B cell (primary cell): ENCODE measurements at regions of chr20 and their contacts with region 1.

Region 1: DNA sequence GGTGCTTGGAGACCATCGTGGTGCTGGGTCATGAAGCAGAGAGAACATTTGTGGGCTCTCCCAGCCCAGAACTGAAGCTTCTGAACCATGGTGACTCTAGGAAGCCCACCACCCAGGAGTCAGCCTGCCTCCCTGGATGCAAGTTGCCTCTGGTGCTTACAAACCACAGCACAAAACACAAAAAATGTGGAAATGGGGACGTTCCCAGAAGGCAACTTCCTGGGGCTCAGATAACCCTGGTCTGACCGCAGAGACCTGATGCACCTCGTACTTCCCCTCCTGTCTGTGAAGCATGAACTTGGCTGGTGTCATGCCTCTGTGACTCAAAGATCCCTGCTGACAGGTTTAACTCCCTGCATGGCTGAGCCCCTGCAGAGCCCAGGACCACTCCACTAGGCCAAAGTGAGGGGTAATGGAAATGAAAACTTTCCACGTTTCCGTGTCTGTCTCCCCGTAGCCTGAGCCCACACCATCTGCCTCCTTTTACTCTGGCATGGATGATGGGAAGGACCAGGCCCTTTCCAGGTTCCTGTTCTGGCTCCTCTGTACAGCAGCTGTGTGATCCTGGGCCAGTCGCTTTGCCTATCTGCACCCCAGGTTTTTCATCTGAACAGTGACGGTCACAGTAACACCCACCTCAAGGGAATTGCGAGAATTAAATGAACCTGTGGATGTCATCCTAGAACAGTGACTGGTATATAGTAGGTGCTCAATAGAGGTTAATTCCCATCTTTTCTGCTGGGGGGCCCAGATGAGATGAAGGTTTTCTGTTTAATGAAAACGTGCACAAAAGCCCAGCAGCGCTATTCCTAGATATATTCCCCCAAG is 57.7 kb downstream of the PPP1R16B start:
- DNase-seq: peak; percentile 91
- ATAC-seq: peak; percentile 78
- H3K4me3 ChIP-seq: peak overlapping the region in 4 of 5 experiments; percentile 15 to 39 (median 18)
- H3K4me3 Mint-ChIP-seq: peak overlapping the region; percentile 68
- H3K27ac ChIP-seq: peak overlapping the region; percentile 97
- H3K27ac Mint-ChIP-seq: peak overlapping the region; percentile 86
- H3K4me1 ChIP-seq: peaks cover 83 to 98% of the 10 kb centered on the region in 2 donors
- H3K4me1 Mint-ChIP-seq: peaks cover 90% of the 10 kb centered on the region
- H3K27me3 ChIP-seq: no peaks in the 10 kb centered on the region
- H3K27me3 Mint-ChIP-seq: no peaks in the 10 kb centered on the region
- CTCF ChIP-seq: no peak

Region 2: GRCh38 chr20:37406010-37406998 is 1456.9 kb before region 1 on chr20:
- CTCF ChIA-PET with region 1: no interaction called
- POLR2A ChIA-PET with region 1: no interaction called
- intact Hi-C with region 1: no loop called
- DNase-seq: peak; percentile 63
- ATAC-seq: peak; percentile 37
- H3K4me3 ChIP-seq: peak overlapping the region in 4 of 5 experiments; percentile 17 to 68 (median 47)
- H3K4me3 Mint-ChIP-seq: peak overlapping the region; percentile 74
- H3K27ac ChIP-seq: no peak overlapping the region
- H3K27ac Mint-ChIP-seq: no peak overlapping the region
- H3K4me1 ChIP-seq: peaks cover 16 to 30% of the 10 kb centered on the region in 2 donors
- H3K4me1 Mint-ChIP-seq: peaks cover 28% of the 10 kb centered on the region
- H3K27me3 ChIP-seq: peaks cover 0 to 13% (median 2%) of the 10 kb centered on the region in 4 experiments
- H3K27me3 Mint-ChIP-seq: peaks cover 16% of the 10 kb centered on the region
- CTCF ChIP-seq: no peak

Region 3: GRCh38 chr20:38875175-38875993 is 12.1 kb after region 1 on chr20:
- CTCF ChIA-PET with region 1: interaction called, 81 read pairs
- POLR2A ChIA-PET with region 1: interaction called, 14 read pairs
- intact Hi-C with region 1: loop called (anchors 1 kb)
- DNase-seq: peak; percentile 93
- ATAC-seq: peak; percentile 73
- H3K4me3 ChIP-seq: peak overlapping the region in 4 of 5 experiments; percentile 14 to 47 (median 35)
- H3K4me3 Mint-ChIP-seq: peak overlapping the region; percentile 86
- H3K27ac ChIP-seq: peak overlapping the region; percentile 93 to 99
- H3K27ac Mint-ChIP-seq: peak overlapping the region; percentile 100
- H3K4me1 ChIP-seq: peaks cover 97 to 99% of the 10 kb centered on the region in 2 donors
- H3K4me1 Mint-ChIP-seq: peaks cover 94% of the 10 kb centered on the region
- H3K27me3 ChIP-seq: no peaks in the 10 kb centered on the region
- H3K27me3 Mint-ChIP-seq: no peaks in the 10 kb centered on the region
- CTCF ChIP-seq: no peak

Region 4: GRCh38 chr20:38883081-38883980 is 20.1 kb after region 1 on chr20:
- CTCF ChIA-PET with region 1: interaction called, 12 read pairs
- POLR2A ChIA-PET with region 1: interaction called, 9 read pairs
- intact Hi-C with region 1: no loop called
- DNase-seq: no peak
- ATAC-seq: no peak
- H3K4me3 ChIP-seq: no peak overlapping the region
- H3K4me3 Mint-ChIP-seq: peak overlapping the region; percentile 82
- H3K27ac ChIP-seq: peak overlapping the region; percentile 66 to 99
- H3K27ac Mint-ChIP-seq: peak overlapping the region; percentile 94
- H3K4me1 ChIP-seq: peaks cover 90 to 99% of the 10 kb centered on the region in 2 donors
- H3K4me1 Mint-ChIP-seq: peaks cover 92% of the 10 kb centered on the region
- H3K27me3 ChIP-seq: no peaks in the 10 kb centered on the region
- H3K27me3 Mint-ChIP-seq: no peaks in the 10 kb centered on the region
- CTCF ChIP-seq: no peak